CD8-positive, alpha-beta T cell (primary cell): ENCODE measurements at regions of chrX and their contacts with region 1.

Region 1: GRCh38 chrX:17689971-17690409 is 47.3 kb upstream of the SCML1 start:
- DNase-seq: peak in 5 of 9 experiments; percentile 13 to 65 (median 29)
- ATAC-seq: peak; percentile 40
- H3K4me3 ChIP-seq: no peak overlapping the region
- H3K4me3 Mint-ChIP-seq: no peak overlapping the region
- H3K27ac ChIP-seq: no peak overlapping the region
- H3K27ac Mint-ChIP-seq: no peak overlapping the region
- H3K4me1 ChIP-seq: no peaks in the 10 kb centered on the region
- H3K4me1 Mint-ChIP-seq: no peaks in the 10 kb centered on the region
- H3K27me3 ChIP-seq: no peaks in the 10 kb centered on the region
- H3K27me3 Mint-ChIP-seq: no peaks in the 10 kb centered on the region
- CTCF ChIP-seq: peak; percentile 51

Region 2: GRCh38 chrX:17242470-17242869 is 447.5 kb before region 1 on chrX:
- CTCF ChIA-PET with region 1: interaction called, 7 read pairs
- POLR2A ChIA-PET with region 1: no interaction called
- intact Hi-C with region 1: loop called in 1 of 2 experiments (anchors 1 kb)
- DNase-seq: peak in 3 of 9 experiments; percentile 18 to 47 (median 31)
- ATAC-seq: no peak
- H3K4me3 ChIP-seq: no peak overlapping the region
- H3K4me3 Mint-ChIP-seq: no peak overlapping the region
- H3K27ac ChIP-seq: no peak overlapping the region
- H3K27ac Mint-ChIP-seq: no peak overlapping the region
- H3K4me1 ChIP-seq: no peaks in the 10 kb centered on the region
- H3K4me1 Mint-ChIP-seq: no peaks in the 10 kb centered on the region
- H3K27me3 ChIP-seq: no peaks in the 10 kb centered on the region
- H3K27me3 Mint-ChIP-seq: no peaks in the 10 kb centered on the region
- CTCF ChIP-seq: peak; percentile 56

Region 3: GRCh38 chrX:17535229-17535628 is 154.8 kb before region 1 on chrX:
- CTCF ChIA-PET with region 1: no interaction called
- POLR2A ChIA-PET with region 1: no interaction called
- intact Hi-C with region 1: loop called (anchors 1 to 2 kb)
- DNase-seq: peak in 5 of 9 experiments; percentile 0 to 45 (median 12)
- ATAC-seq: no peak
- H3K4me3 ChIP-seq: no peak overlapping the region
- H3K4me3 Mint-ChIP-seq: no peak overlapping the region
- H3K27ac ChIP-seq: no peak overlapping the region
- H3K27ac Mint-ChIP-seq: no peak overlapping the region
- H3K4me1 ChIP-seq: no peaks in the 10 kb centered on the region
- H3K4me1 Mint-ChIP-seq: peaks cover 1% of the 10 kb centered on the region
- H3K27me3 ChIP-seq: no peaks in the 10 kb centered on the region
- H3K27me3 Mint-ChIP-seq: no peaks in the 10 kb centered on the region
- CTCF ChIP-seq: no peak